Aorta (tissue), 5 donors: ENCODE measurements at regions of chr16 and their contacts with region 1.

Region 1: DNA sequence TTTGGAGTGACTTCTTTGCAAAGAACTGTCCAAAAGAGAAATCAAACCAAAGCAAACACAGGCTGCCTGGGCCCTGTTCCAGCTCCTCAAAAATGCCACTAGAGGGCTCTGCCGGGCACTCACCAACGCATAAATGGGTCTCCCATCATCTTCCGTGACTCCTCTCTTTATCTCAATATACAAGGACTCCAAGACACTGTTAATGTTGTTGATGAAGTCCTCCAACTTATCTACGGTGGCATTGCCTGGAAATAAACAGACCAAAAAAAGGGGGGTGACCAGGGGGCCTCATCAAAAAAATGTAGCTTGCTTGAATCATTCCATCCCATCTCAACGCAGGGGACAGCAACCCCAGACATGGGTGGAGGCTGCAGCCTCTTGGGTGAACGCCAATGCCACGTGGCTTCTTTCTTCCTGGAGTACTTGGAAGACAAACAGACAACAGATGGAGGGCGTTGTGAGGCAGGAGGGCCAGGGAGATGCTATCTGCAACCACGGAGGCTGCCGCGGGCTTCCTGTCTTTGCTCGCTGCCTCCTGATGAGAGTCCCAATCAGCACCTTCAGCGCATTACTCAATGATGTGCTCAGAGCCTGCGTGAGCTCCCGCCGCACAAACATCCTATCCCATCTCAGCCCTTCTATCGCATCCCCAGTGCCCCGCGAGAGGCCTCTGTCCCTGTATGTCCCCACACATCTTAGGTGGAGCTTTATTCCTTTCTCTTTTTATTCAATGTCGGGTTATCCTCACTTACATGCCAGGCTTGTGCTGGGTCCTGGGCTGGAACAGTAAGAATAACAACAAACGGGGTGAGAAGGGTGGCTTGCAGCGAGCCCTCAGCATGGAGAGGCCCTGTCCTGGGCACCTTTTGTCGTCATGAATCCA is 32.0 kb downstream of the KDM8 start:
- DNase-seq: peak; percentile 92 to 94
- ATAC-seq: peak; percentile 85
- H3K4me3 ChIP-seq: no peak overlapping the region
- H3K27ac ChIP-seq: no peak overlapping the region
- H3K4me1 ChIP-seq: no peaks in the 10 kb centered on the region
- H3K27me3 ChIP-seq: no peaks in the 10 kb centered on the region

Region 2: GRCh38 chr16:27289669-27290068 is 54.4 kb after region 1 on chr16:
- intact Hi-C with region 1: no loop called
- DNase-seq: no peak
- ATAC-seq: no peak
- H3K4me3 ChIP-seq: no peak overlapping the region
- H3K27ac ChIP-seq: no peak overlapping the region
- H3K4me1 ChIP-seq: peaks cover 0 to 3% of the 10 kb centered on the region in 2 donors
- H3K27me3 ChIP-seq: no peaks in the 10 kb centered on the region

Region 3: GRCh38 chr16:27326738-27327585 is 91.7 kb after region 1 on chr16:
- intact Hi-C with region 1: loop called in 1 of 2 experiments (anchors 10 kb)
- DNase-seq: peak; percentile 90 to 92
- ATAC-seq: peak; percentile 80
- H3K4me3 ChIP-seq: no peak overlapping the region
- H3K27ac ChIP-seq: peak overlapping the region in 1 of 2 donors; percentile 76
- H3K4me1 ChIP-seq: peaks cover 0 to 2% of the 10 kb centered on the region in 2 donors
- H3K27me3 ChIP-seq: no peaks in the 10 kb centered on the region

Region 4: GRCh38 chr16:27367461-27368357 is 132.4 kb after region 1 on chr16:
- intact Hi-C with region 1: loop called (anchors 2 to 5 kb)
- DNase-seq: peak; percentile 90 to 91
- ATAC-seq: peak; percentile 88
- H3K4me3 ChIP-seq: no peak overlapping the region
- H3K27ac ChIP-seq: no peak overlapping the region
- H3K4me1 ChIP-seq: no peaks in the 10 kb centered on the region
- H3K27me3 ChIP-seq: no peaks in the 10 kb centered on the region